ENCODE measurements at regions of chr1 and their contacts with region 1.

Region 1: GRCh38 chr1:157985473-157985872 is 8.0 kb upstream of the KIRREL1 start:
- DNase-seq: no peak
- H3K4me3 ChIP-seq: no peak overlapping the region
- H3K27ac ChIP-seq: no peak overlapping the region
- H3K4me1 ChIP-seq: no peaks in the 10 kb centered on the region
- H3K27me3 ChIP-seq: no peaks in the 10 kb centered on the region
- CTCF ChIP-seq: no peak
- POLR2A ChIP-seq: no peak

Region 2: DNA sequence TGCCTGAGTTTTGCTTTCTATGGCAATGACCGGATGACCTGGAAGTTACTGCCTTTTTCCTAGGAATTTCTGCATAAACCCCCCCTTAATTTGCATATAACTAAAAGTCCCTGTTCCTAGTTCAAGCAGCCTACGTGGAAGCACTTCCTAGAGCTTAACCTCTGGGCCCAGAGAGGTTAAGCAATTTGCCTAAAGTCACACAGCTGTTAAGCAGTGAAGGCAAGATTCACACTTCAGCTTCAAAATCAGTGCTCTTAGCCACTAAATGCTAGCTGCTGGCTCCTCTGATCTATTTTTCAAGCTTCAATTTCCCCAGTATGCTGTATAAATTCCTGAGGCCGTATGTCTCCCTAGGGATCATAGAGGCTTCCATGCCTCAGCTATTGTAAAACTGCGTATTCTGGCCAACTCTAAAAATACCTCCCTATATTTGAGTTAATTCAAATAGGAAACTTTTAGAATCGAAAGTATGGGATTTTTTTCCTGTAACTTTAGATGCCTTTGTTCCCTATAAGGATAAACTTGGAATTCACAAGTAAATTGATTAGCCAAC is 90.8 kb before region 1 on chr1:
- intact Hi-C with region 1: no loop called
- DNase-seq: no peak
- H3K4me3 ChIP-seq: no peak overlapping the region
- H3K27ac ChIP-seq: no peak overlapping the region
- H3K4me1 ChIP-seq: no peaks in the 10 kb centered on the region
- H3K27me3 ChIP-seq: no peaks in the 10 kb centered on the region
- CTCF ChIP-seq: no peak
- POLR2A ChIP-seq: no peak

Region 3: GRCh38 chr1:158095737-158096335 is 110.4 kb after region 1 on chr1:
- intact Hi-C with region 1: loop called (anchors 5 kb)
- DNase-seq: no peak
- H3K4me3 ChIP-seq: no peak overlapping the region
- H3K27ac ChIP-seq: no peak overlapping the region
- H3K4me1 ChIP-seq: peaks cover 24% of the 10 kb centered on the region
- H3K27me3 ChIP-seq: no peaks in the 10 kb centered on the region
- CTCF ChIP-seq: peak in 2 of 3 experiments; percentile 24 to 38
- POLR2A ChIP-seq: no peak